ENCODE measurements at regions of chr12 and their contacts with region 1.

Region 1: GRCh38 chr12:546921-547845 is 87.4 kb downstream of the B4GALNT3 start:
- DNase-seq: no peak
- H3K4me3 ChIP-seq: no peak overlapping the region
- H3K27ac ChIP-seq: no peak overlapping the region
- H3K4me1 ChIP-seq: no peaks in the 10 kb centered on the region
- H3K27me3 ChIP-seq: no peaks in the 10 kb centered on the region
- CTCF ChIP-seq: peak; percentile 92 to 100 (median 99)
- POLR2A ChIP-seq: no peak

Region 2: DNA sequence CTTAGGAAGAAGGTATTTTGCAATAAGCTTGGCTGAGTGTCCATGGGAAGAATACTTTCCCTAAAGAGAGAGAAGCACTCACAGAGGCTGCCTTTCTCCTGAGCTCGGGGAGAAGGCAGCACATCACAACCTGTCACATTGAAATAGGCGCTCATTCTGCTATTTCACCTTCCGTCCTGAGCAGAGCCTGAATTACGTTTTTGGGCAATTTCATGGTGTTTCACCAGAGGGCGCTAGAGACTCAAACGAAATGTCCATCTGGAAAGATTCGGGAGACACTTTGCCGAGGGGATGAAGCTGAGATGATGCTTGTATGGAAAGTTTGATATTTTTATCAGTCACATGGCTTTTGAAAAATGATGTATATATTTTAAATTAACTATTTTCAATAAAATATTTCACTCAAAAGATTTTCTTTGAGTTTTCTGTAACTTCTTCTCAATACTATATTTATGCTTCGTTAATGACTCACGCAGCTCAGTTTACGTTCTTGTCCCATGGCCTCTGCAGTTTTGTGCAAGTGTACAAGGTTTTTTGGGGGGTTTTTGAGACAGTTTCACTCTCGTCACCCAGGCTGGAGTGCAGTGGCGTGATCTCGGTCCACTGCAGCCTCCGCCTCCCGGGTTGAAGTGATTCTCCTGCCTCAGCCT is 104.8 kb before region 1 on chr12:
- intact Hi-C with region 1: loop called (anchors 2 kb)
- DNase-seq: peak; percentile 27
- H3K4me3 ChIP-seq: no peak overlapping the region
- H3K27ac ChIP-seq: no peak overlapping the region
- H3K4me1 ChIP-seq: no peaks in the 10 kb centered on the region
- H3K27me3 ChIP-seq: no peaks in the 10 kb centered on the region
- CTCF ChIP-seq: peak; percentile 44 to 80 (median 72)
- POLR2A ChIP-seq: no peak

Region 3: DNA sequence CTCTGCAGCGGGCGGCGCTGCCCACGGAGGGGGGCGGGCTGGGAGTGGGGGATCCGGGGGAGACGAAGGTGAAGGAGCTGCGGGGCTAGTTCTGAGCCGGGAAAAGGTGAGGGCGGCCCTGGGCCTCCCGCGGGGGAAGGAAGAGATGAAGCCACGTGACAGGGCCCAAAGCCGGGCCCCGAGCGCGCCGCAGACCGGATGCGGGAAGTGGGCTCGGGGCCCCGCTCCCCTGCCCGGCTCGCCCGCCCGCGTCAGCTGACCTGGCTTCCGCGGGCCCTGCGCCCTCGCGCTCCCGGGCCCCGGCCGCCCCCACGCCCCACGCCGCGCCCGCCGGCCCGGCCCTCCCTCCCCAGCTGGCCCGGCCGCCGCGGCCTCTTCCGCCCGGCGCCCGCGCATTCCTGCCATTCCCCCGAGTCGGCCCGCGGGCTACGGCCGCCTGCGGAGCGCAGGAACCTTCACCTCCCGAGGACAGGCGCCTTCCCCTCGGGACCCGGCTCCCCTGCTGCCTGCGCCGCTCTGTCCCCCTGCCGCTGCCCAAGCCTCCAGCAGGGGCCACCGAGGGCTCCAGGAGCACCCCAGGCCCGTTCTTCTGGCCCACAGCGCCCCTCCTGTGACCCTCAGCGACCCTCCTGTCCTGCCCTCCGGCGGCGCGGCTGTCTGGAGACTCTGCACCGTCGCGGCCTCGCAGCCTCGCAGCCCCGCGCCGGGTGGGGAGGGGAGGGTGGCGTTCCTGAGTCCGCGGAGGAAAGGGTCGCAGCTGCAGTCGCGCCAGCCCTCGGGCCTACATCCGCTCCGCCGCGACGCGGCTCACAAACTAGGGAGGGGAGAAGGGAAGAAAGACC is 95.7 kb after region 1 on chr12:
- intact Hi-C with region 1: no loop called
- DNase-seq: peak; percentile 66
- H3K4me3 ChIP-seq: peak overlapping the region; percentile 58 to 63
- H3K27ac ChIP-seq: peak overlapping the region; percentile 89 to 93
- H3K4me1 ChIP-seq: peaks cover 8% of the 10 kb centered on the region
- H3K27me3 ChIP-seq: no peaks in the 10 kb centered on the region
- CTCF ChIP-seq: peak in 2 of 4 experiments; percentile 19 to 40
- POLR2A ChIP-seq: no peak

Measured in prostate gland (tissue), 2 donors.